ENCODE measurements at regions of chr16 and their contacts with region 1.

Region 1: GRCh38 chr16:87383629-87384161 is at the start of gene FBXO31:
- DNase-seq: peak; percentile 83 to 92 (median 90)
- H3K4me3 ChIP-seq: peak within 1 kb of the TSS; percentile 87
- H3K4me3 Mint-ChIP-seq: peak within 1 kb of the TSS; percentile 90 to 96 (median 94)
- H3K27ac ChIP-seq: peak within 1 kb of the TSS; percentile 78
- H3K27ac Mint-ChIP-seq: peak within 1 kb of the TSS; percentile 90 to 99 (median 96)
- H3K4me1 ChIP-seq: peaks cover 50% of the 10 kb centered on the region
- H3K4me1 Mint-ChIP-seq: peaks cover 55 to 75% (median 57%) of the 10 kb centered on the region in 3 donors
- H3K27me3 ChIP-seq: no peaks in the 10 kb centered on the region
- H3K27me3 Mint-ChIP-seq: peaks cover 0 to 6% of the 10 kb centered on the region in 2 donors
- total RNA-seq, gene FBXO31: 35.6 to 40.9 TPM

Region 2: GRCh38 chr16:87471278-87472141 is 87.8 kb after region 1 on chr16:
- CTCF ChIA-PET with region 1: no interaction called
- POLR2A ChIA-PET with region 1: interaction called, 12 read pairs
- DNase-seq: no peak
- H3K4me3 ChIP-seq: no peak overlapping the region
- H3K4me3 Mint-ChIP-seq: no peak overlapping the region
- H3K27ac ChIP-seq: no peak overlapping the region
- H3K27ac Mint-ChIP-seq: peak overlapping the region in 3 of 8 donors; percentile 9 to 73 (median 24)
- H3K4me1 ChIP-seq: peaks cover 2% of the 10 kb centered on the region
- H3K4me1 Mint-ChIP-seq: peaks cover 28 to 40% (median 37%) of the 10 kb centered on the region in 3 donors
- H3K27me3 ChIP-seq: no peaks in the 10 kb centered on the region
- H3K27me3 Mint-ChIP-seq: no peaks in the 10 kb centered on the region

Measured in CD8-positive, alpha-beta memory T cell (primary cell).